HEK293 (cell line): ENCODE measurements at regions of chr1 and their contacts with region 1.

Region 1: GRCh38 chr1:50368179-50369012 is 54.8 kb downstream of the DMRTA2 start:
- H3K4me3 ChIP-seq: no peak overlapping the region
- H3K27ac ChIP-seq: no peak overlapping the region
- H3K4me1 ChIP-seq: no peaks in the 10 kb centered on the region
- CTCF ChIP-seq: peak; percentile 85

Region 2: GRCh38 chr1:50378770-50379169 is 10.4 kb after region 1 on chr1:
- CTCF ChIA-PET with region 1: interaction called, 15 read pairs
- POLR2A ChIA-PET with region 1: no interaction called
- H3K4me3 ChIP-seq: no peak overlapping the region
- H3K27ac ChIP-seq: no peak overlapping the region
- H3K4me1 ChIP-seq: no peaks in the 10 kb centered on the region
- CTCF ChIP-seq: no peak

Region 3: GRCh38 chr1:50605186-50605875 is 236.9 kb after region 1 on chr1:
- CTCF ChIA-PET with region 1: interaction called, 15 read pairs
- POLR2A ChIA-PET with region 1: no interaction called
- H3K4me3 ChIP-seq: no peak overlapping the region
- H3K27ac ChIP-seq: no peak overlapping the region
- H3K4me1 ChIP-seq: peaks cover 8% of the 10 kb centered on the region
- CTCF ChIP-seq: peak; percentile 16; the same call in 1 of the 2 replicates